ENCODE measurements at regions of chr1 and their contacts with region 1.

Region 1: GRCh38 chr1:8497210-8497801 is 179.4 kb downstream of the SLC45A1 start:
- DNase-seq: peak; percentile 26
- H3K4me3 ChIP-seq: no peak overlapping the region
- H3K27me3 ChIP-seq: no peaks in the 10 kb centered on the region
- CTCF ChIP-seq: no peak

Region 2: DNA sequence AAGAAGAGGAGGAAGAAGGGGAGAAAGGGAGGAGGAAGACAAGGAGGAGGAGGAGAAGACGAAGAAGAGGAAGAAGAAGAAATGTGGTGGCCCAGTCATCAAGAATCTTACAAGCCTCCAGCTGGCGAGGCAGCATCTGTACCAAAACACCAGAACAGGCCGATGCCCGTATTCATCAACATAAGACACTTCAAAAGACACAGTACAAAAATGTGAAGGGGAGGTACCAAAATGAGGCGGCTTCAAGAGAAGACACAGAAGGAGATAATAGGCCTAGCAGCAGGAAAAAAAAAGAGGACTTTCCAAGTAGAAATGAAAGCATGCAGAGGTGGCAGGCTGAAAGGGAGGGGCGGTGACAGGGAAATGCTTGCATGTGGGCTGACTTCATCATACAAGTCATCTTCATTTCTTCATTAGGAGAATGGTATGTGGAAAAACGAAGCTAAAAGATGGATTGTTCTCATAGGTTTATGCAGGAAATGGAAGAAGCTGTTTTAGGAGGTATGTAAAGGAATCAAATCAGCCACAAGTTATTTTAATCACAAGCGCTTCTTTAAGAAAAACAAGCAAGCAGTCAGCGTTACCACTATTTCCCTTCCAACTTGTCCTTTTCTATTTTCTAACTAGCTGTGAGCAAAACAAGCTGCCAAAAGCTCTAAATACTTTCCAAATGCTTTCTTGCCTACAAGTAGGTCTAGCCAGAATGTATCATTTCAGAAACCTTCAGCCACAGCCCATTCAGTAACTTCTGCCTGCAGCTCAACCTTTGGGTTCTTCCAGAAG is 12.9 kb after region 1 on chr1:
- CTCF ChIA-PET with region 1: interaction called, 4 read pairs
- POLR2A ChIA-PET with region 1: interaction called, 26 read pairs
- DNase-seq: peak; percentile 94
- H3K4me3 ChIP-seq: peak overlapping the region; percentile 22
- H3K27me3 ChIP-seq: no peaks in the 10 kb centered on the region
- CTCF ChIP-seq: no peak